ENCODE measurements at regions of chr1 and their contacts with region 1.

Region 1: DNA sequence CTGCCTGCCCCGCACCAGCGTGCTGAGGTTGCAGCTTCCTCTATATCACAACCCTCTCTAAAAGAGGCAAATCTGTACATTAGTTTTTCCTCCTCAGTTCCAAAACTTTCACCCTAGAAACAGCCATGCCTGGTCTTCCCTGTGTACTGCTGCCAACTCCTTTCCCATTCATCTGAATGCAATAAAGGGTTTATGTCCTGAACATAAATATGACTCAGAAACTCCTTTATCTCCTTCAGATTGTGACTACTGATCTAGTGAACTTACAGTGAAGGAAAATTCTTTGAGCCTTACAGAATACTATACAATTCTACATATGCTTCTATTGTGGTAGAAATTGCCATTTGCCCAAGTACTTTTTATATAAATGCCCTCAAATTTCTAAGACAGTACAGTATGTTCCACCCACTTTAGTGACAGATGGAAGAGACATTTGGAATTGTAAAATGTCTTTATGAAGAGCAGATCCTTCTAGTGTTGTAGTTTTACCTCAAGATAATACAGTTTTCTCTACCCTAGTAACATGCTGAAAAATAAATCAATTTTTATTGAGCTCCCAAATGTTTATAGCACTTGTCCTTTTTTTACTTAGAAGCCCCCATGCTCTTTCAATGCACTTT is 345.1 kb upstream of the SNX7 start:
- DNase-seq: peak in 1 of 5 donors; percentile 38
- ATAC-seq: no peak
- H3K4me3 ChIP-seq: no peak overlapping the region
- H3K27ac ChIP-seq: no peak overlapping the region
- H3K4me1 ChIP-seq: peaks cover 0 to 18% (median 0%) of the 10 kb centered on the region in 12 donors
- H3K27me3 ChIP-seq: no peaks in the 10 kb centered on the region
- CTCF ChIP-seq: no peak
- POLR2A ChIP-seq: no peak

Region 2: GRCh38 chr1:98210064-98210463 is 106.3 kb before region 1 on chr1:
- intact Hi-C with region 1: no loop called
- DNase-seq: no peak
- ATAC-seq: no peak
- H3K4me3 ChIP-seq: no peak overlapping the region
- H3K27ac ChIP-seq: no peak overlapping the region
- H3K4me1 ChIP-seq: no peaks in the 10 kb centered on the region
- H3K27me3 ChIP-seq: no peaks in the 10 kb centered on the region
- CTCF ChIP-seq: no peak
- POLR2A ChIP-seq: no peak

Region 3: DNA sequence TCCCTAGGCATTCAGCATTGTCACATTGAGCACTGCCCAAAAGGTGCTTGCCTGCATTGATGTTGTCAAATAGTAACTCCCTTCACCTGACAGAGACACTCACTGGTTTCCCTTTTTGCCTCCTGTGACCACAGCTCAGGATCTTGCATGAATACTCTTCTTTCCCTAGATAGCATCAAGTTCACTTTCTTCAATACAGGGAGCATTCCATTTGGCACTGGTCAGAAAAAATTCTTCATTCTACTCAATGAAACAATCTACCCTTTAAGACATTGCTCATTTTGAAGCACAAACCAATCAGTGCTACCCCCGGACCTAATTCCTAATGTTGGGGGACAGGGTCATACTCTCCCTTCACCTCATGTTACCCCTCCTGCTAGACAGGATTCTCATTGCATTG is 26.2 kb after region 1 on chr1:
- intact Hi-C with region 1: loop called in 1 of 10 experiments (anchors 2 kb)
- DNase-seq: no peak
- ATAC-seq: no peak
- H3K4me3 ChIP-seq: no peak overlapping the region
- H3K27ac ChIP-seq: no peak overlapping the region
- H3K4me1 ChIP-seq: no peaks in the 10 kb centered on the region
- H3K27me3 ChIP-seq: no peaks in the 10 kb centered on the region
- CTCF ChIP-seq: no peak
- POLR2A ChIP-seq: no peak

Measured in heart left ventricle (tissue), 16 donors.